ENCODE measurements at regions of chr5 and their contacts with region 1.

Region 1: GRCh38 chr5:84549054-84549453 is 164.4 kb upstream of the EDIL3 start:
- DNase-seq: no peak
- H3K4me3 ChIP-seq: no peak overlapping the region
- H3K27ac ChIP-seq: no peak overlapping the region
- H3K4me1 ChIP-seq: no peaks in the 10 kb centered on the region
- H3K27me3 ChIP-seq: no peaks in the 10 kb centered on the region
- CTCF ChIP-seq: no peak

Region 2: DNA sequence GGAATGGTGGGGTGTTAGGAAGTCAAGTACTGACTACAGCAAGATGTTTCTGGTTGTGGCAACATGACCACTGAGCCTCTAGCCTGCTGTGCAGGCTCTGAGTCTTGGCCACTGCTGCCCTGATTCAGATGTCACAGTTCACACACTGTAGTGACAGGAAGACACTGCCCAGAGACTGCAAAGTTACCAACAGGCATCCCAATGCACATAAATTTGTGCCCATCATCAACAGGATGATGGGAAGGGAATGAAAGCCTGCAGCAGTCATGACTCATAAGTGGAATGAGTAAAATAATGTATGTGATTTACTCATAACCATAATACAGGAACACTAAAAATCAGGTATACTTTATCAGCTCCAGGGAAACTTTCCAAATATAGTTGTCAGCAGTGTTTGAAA is 576.8 kb before region 1 on chr5:
- CTCF ChIA-PET with region 1: no interaction called
- POLR2A ChIA-PET with region 1: no interaction called
- intact Hi-C with region 1: no loop called
- DNase-seq: no peak
- H3K4me3 ChIP-seq: no peak overlapping the region
- H3K27ac ChIP-seq: no peak overlapping the region
- H3K4me1 ChIP-seq: no peaks in the 10 kb centered on the region
- H3K27me3 ChIP-seq: no peaks in the 10 kb centered on the region
- CTCF ChIP-seq: no peak

Region 3: DNA sequence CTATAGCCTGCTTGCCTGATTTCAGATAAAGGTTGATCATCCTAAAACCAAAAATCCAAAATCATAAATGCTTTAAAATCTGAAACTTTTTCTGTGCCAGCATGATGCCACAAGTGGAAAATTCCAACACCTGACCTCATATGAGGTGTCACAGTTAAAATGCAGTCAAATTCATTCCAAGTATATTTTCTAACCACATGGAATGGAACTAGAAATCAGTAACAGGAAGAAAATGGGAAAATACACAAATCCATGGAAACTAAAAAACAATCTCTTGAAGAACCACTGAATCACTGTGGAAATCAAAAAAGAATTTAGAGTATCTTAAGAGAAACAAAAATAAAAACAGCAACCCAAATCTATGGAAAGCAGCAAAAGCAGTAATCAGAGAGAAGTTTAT is 1771.2 kb after region 1 on chr5:
- CTCF ChIA-PET with region 1: interaction called, 14 read pairs
- POLR2A ChIA-PET with region 1: no interaction called
- intact Hi-C with region 1: no loop called
- DNase-seq: no peak
- H3K4me3 ChIP-seq: no peak overlapping the region
- H3K27ac ChIP-seq: no peak overlapping the region
- H3K4me1 ChIP-seq: no peaks in the 10 kb centered on the region
- H3K27me3 ChIP-seq: no peaks in the 10 kb centered on the region
- CTCF ChIP-seq: no peak